Cardiac septum (tissue), 1 donor: ENCODE measurements at regions of chr6 and their contacts with region 1.

Region 1: DNA sequence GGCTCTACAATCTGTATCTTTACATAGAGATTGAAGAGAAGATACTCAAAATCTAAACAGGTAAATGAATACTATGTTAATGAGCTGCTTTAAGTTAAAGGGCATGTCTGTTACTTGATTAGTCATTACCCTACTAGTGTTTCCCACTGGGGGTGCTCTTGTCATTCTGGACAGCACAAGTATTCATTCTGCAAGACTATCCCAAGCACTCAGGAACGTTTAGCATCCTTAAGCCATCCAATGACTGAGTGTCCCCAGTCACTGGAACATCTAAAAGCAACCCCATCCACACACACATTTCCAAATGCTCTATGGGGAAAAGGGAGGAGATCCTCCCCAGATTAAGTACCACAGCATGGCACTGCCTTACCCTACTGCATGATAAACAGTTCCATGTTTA is 25.7 kb downstream of the EZR start:
- DNase-seq: no peak

Region 2: GRCh38 chr6:158387036-158387435 is 406.4 kb before region 1 on chr6:
- intact Hi-C with region 1: no loop called
- DNase-seq: no peak

Region 3: GRCh38 chr6:158972241-158973233 is 179.1 kb after region 1 on chr6:
- intact Hi-C with region 1: loop called (anchors 5 kb)
- DNase-seq: no peak